Spleen (tissue), 13 donors: ENCODE measurements at regions of chr2 and their contacts with region 1.

Region 1: GRCh38 chr2:60075048-60075447 is 478.4 kb downstream of the BCL11A start:
- DNase-seq: no peak
- H3K4me3 ChIP-seq: no peak overlapping the region
- H3K27ac ChIP-seq: no peak overlapping the region
- H3K4me1 ChIP-seq: no peaks in the 10 kb centered on the region
- H3K27me3 ChIP-seq: no peaks in the 10 kb centered on the region
- CTCF ChIP-seq: no peak
- POLR2A ChIP-seq: no peak

Region 2: DNA sequence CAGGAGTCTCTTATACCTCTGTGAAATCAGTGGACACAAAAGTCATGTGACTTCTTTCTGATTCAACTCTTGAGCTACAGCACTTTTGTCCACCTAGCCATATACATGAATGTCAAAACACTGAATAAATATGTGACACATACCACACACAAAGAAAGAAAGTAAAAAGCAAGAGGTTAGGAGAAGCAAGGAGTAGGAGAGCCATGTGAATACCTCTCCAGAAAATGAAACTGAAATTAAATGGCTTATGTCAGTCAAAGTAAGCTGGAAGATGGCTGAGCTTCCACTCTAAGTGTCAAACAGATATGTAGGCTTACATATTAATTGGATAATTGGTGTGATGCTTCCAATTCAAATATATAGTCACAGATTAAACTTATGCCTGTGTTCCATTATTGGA is 572.1 kb before region 1 on chr2:
- intact Hi-C with region 1: no loop called
- DNase-seq: no peak
- H3K4me3 ChIP-seq: no peak overlapping the region
- H3K27ac ChIP-seq: no peak overlapping the region
- H3K4me1 ChIP-seq: no peaks in the 10 kb centered on the region
- H3K27me3 ChIP-seq: no peaks in the 10 kb centered on the region
- CTCF ChIP-seq: no peak
- POLR2A ChIP-seq: no peak

Region 3: DNA sequence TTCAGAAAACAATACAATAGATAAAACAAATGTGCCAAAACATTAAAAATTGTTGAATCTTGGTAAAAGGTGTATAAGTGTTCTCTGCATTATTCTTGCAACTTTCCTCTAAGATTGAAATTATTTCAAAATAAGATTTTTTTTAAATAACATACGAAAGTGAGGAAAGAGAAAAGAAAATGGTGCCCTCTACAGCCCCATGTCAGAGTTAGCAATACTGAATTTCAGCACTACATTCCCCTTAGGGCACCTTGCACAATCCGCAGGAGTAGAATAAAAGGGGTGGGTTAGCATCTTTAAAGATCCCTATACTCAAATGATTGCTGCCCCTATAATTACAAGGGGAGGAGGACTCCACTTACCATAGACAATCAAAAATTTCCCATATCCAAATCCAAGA is 44.7 kb after region 1 on chr2:
- intact Hi-C with region 1: loop called (anchors 2 kb)
- DNase-seq: no peak
- H3K4me3 ChIP-seq: no peak overlapping the region
- H3K27ac ChIP-seq: no peak overlapping the region
- H3K4me1 ChIP-seq: no peaks in the 10 kb centered on the region
- H3K27me3 ChIP-seq: no peaks in the 10 kb centered on the region
- CTCF ChIP-seq: no peak
- POLR2A ChIP-seq: no peak